Caco-2 (cell line): ENCODE measurements at regions of chr4 and their contacts with region 1.

Region 1: GRCh38 chr4:183074296-183074990 is 24.6 kb upstream of the WWC2 start:
- DNase-seq: peak; percentile 37 to 52
- H3K4me3 ChIP-seq: no peak overlapping the region
- H3K4me3 Mint-ChIP-seq: peak overlapping the region; percentile 47
- H3K27ac Mint-ChIP-seq: peak overlapping the region; percentile 37
- H3K4me1 ChIP-seq: peaks cover 42% of the 10 kb centered on the region
- H3K4me1 Mint-ChIP-seq: peaks cover 42% of the 10 kb centered on the region
- H3K27me3 ChIP-seq: no peaks in the 10 kb centered on the region
- H3K27me3 Mint-ChIP-seq: no peaks in the 10 kb centered on the region
- CTCF ChIP-seq: no peak

Region 2: DNA sequence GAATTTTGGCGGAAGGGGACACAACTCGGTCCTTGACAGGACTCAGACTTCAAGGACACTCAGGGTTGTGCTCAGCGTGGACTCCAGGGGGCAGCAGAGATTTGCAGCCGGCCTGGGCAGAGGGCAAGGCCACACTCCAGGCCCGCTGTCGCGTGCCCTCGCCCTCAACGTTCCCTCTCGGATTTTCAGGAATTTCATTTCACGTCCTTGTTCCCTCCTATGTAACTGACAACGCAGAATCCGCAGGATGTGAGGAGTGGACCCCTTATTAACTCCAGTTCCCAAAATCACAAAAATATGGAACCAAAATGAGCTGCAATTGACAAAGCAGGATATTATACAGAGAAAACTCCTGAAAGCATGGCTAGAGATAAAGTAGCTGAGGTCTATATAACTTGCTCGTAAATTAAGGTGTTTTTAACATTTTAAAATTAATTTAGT is 136.2 kb before region 1 on chr4:
- CTCF ChIA-PET with region 1: interaction called, 3 read pairs
- POLR2A ChIA-PET with region 1: no interaction called
- intact Hi-C with region 1: loop called (anchors 1 kb)
- DNase-seq: peak; percentile 79 to 85
- H3K4me3 ChIP-seq: no peak overlapping the region
- H3K4me3 Mint-ChIP-seq: no peak overlapping the region
- H3K27ac Mint-ChIP-seq: no peak overlapping the region
- H3K4me1 ChIP-seq: no peaks in the 10 kb centered on the region
- H3K4me1 Mint-ChIP-seq: no peaks in the 10 kb centered on the region
- H3K27me3 ChIP-seq: no peaks in the 10 kb centered on the region
- H3K27me3 Mint-ChIP-seq: peaks cover 3% of the 10 kb centered on the region
- CTCF ChIP-seq: peak; percentile 82 to 87

Region 3: GRCh38 chr4:183111452-183111885 is 37.0 kb after region 1 on chr4:
- CTCF ChIA-PET with region 1: interaction called, 3 read pairs
- POLR2A ChIA-PET with region 1: no interaction called
- intact Hi-C with region 1: loop called (anchors 1 kb)
- DNase-seq: peak; percentile 53 to 65
- H3K4me3 ChIP-seq: no peak overlapping the region
- H3K4me3 Mint-ChIP-seq: peak overlapping the region; percentile 68
- H3K27ac Mint-ChIP-seq: peak overlapping the region; percentile 81
- H3K4me1 ChIP-seq: peaks cover 84% of the 10 kb centered on the region
- H3K4me1 Mint-ChIP-seq: peaks cover 56% of the 10 kb centered on the region
- H3K27me3 ChIP-seq: no peaks in the 10 kb centered on the region
- H3K27me3 Mint-ChIP-seq: no peaks in the 10 kb centered on the region
- CTCF ChIP-seq: no peak

Region 4: GRCh38 chr4:183142571-183143550 is 68.4 kb after region 1 on chr4:
- CTCF ChIA-PET with region 1: no interaction called
- POLR2A ChIA-PET with region 1: no interaction called
- intact Hi-C with region 1: loop called (anchors 1 kb)
- DNase-seq: no peak
- H3K4me3 ChIP-seq: no peak overlapping the region
- H3K4me3 Mint-ChIP-seq: no peak overlapping the region
- H3K27ac Mint-ChIP-seq: peak overlapping the region; percentile 5
- H3K4me1 ChIP-seq: peaks cover 26% of the 10 kb centered on the region
- H3K4me1 Mint-ChIP-seq: peaks cover 20% of the 10 kb centered on the region
- H3K27me3 ChIP-seq: no peaks in the 10 kb centered on the region
- H3K27me3 Mint-ChIP-seq: no peaks in the 10 kb centered on the region
- CTCF ChIP-seq: no peak

Region 5: DNA sequence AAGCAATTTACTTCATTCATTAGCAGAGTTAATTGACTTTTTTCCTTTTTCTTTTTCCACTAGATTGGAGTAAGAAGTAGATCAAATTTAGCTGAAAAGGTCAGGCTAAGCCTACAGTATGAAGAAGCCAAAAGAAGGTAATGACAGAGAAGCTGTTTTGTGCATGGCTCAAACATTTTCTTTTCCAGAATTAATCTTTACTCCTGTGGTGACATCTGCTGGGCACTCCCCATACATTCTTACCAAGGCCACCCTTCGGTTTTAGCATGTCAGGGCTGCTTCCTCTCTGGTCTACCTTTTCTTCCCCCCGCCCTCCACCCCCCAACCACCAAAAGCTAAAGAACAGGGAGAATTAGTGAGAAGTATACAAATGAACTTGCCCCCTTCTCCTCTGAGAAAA is 175.4 kb after region 1 on chr4:
- CTCF ChIA-PET with region 1: interaction called, 8 read pairs
- POLR2A ChIA-PET with region 1: no interaction called
- intact Hi-C with region 1: loop called (anchors 1 kb)
- DNase-seq: peak in 1 of 2 experiments; percentile 35
- H3K4me3 ChIP-seq: no peak overlapping the region
- H3K4me3 Mint-ChIP-seq: no peak overlapping the region
- H3K27ac Mint-ChIP-seq: no peak overlapping the region
- H3K4me1 ChIP-seq: peaks cover 25% of the 10 kb centered on the region
- H3K4me1 Mint-ChIP-seq: peaks cover 9% of the 10 kb centered on the region
- H3K27me3 ChIP-seq: no peaks in the 10 kb centered on the region
- H3K27me3 Mint-ChIP-seq: no peaks in the 10 kb centered on the region
- CTCF ChIP-seq: peak in 1 of 2 experiments; percentile 24

Region 6: GRCh38 chr4:183261953-183262775 is 187.7 kb after region 1 on chr4:
- CTCF ChIA-PET with region 1: interaction called, 14 read pairs
- POLR2A ChIA-PET with region 1: no interaction called
- intact Hi-C with region 1: loop called (anchors 1 kb)
- DNase-seq: peak; percentile 76 to 83
- H3K4me3 ChIP-seq: no peak overlapping the region
- H3K4me3 Mint-ChIP-seq: no peak overlapping the region
- H3K27ac Mint-ChIP-seq: peak overlapping the region; percentile 73
- H3K4me1 ChIP-seq: peaks cover 33% of the 10 kb centered on the region
- H3K4me1 Mint-ChIP-seq: peaks cover 15% of the 10 kb centered on the region
- H3K27me3 ChIP-seq: no peaks in the 10 kb centered on the region
- H3K27me3 Mint-ChIP-seq: no peaks in the 10 kb centered on the region
- CTCF ChIP-seq: peak; percentile 74 to 82